ENCODE measurements at regions of chr9 and their contacts with region 1.

Region 1: GRCh38 chr9:114681594-114682332 is at the start of gene TEX48:
- DNase-seq: peak; percentile 56 to 86 (median 69)
- H3K4me3 ChIP-seq: no peak within 1 kb of the TSS
- H3K4me3 Mint-ChIP-seq: peak within 1 kb of the TSS in 6 of 7 donors; percentile 53 to 89 (median 74)
- H3K27ac ChIP-seq: no peak within 1 kb of the TSS
- H3K27ac Mint-ChIP-seq: peak within 1 kb of the TSS in 7 of 8 donors; percentile 3 to 95 (median 79)
- H3K4me1 ChIP-seq: peaks cover 6% of the 10 kb centered on the region
- H3K4me1 Mint-ChIP-seq: peaks cover 18 to 27% (median 19%) of the 10 kb centered on the region in 3 donors
- H3K27me3 ChIP-seq: peaks cover 9% of the 10 kb centered on the region
- H3K27me3 Mint-ChIP-seq: peaks cover 0 to 15% of the 10 kb centered on the region in 2 donors
- total RNA-seq, gene TEX48: 0.46 to 0.86 TPM

Region 2: GRCh38 chr9:114641967-114642366 is 39.8 kb before region 1 on chr9:
- CTCF ChIA-PET with region 1: no interaction called
- POLR2A ChIA-PET with region 1: no interaction called
- DNase-seq: no peak
- H3K4me3 ChIP-seq: no peak overlapping the region
- H3K4me3 Mint-ChIP-seq: no peak overlapping the region
- H3K27ac ChIP-seq: no peak overlapping the region
- H3K27ac Mint-ChIP-seq: peak overlapping the region in 1 of 8 donors; percentile 54
- H3K4me1 ChIP-seq: no peaks in the 10 kb centered on the region
- H3K4me1 Mint-ChIP-seq: no peaks in the 10 kb centered on the region
- H3K27me3 ChIP-seq: no peaks in the 10 kb centered on the region
- H3K27me3 Mint-ChIP-seq: no peaks in the 10 kb centered on the region

Region 3: DNA sequence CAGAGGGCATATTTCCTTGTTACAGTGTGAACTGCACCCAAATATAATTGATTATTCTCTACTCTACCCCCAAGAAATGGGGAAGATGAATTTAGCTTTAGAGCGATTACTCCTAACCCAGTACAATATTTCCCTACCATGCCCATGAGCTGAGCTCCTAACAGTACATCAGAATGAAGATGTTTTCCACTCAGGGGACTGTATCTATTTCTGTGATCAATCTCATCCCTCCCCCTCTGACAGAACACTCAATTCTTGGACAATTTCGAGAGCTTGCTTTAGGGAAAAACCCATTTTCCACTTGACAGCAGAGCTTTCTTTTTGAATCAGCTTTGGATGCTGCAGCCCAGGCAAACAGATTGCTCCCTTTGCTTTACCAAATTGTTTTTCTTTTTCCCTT is 24.9 kb after region 1 on chr9:
- CTCF ChIA-PET with region 1: interaction called, 11 read pairs
- POLR2A ChIA-PET with region 1: no interaction called
- DNase-seq: no peak
- H3K4me3 ChIP-seq: no peak overlapping the region
- H3K4me3 Mint-ChIP-seq: no peak overlapping the region
- H3K27ac ChIP-seq: no peak overlapping the region
- H3K27ac Mint-ChIP-seq: no peak overlapping the region
- H3K4me1 ChIP-seq: peaks cover 4% of the 10 kb centered on the region
- H3K4me1 Mint-ChIP-seq: peaks cover 6 to 22% (median 21%) of the 10 kb centered on the region in 3 donors
- H3K27me3 ChIP-seq: no peaks in the 10 kb centered on the region
- H3K27me3 Mint-ChIP-seq: peaks cover 0 to 2% of the 10 kb centered on the region in 2 donors

Region 4: DNA sequence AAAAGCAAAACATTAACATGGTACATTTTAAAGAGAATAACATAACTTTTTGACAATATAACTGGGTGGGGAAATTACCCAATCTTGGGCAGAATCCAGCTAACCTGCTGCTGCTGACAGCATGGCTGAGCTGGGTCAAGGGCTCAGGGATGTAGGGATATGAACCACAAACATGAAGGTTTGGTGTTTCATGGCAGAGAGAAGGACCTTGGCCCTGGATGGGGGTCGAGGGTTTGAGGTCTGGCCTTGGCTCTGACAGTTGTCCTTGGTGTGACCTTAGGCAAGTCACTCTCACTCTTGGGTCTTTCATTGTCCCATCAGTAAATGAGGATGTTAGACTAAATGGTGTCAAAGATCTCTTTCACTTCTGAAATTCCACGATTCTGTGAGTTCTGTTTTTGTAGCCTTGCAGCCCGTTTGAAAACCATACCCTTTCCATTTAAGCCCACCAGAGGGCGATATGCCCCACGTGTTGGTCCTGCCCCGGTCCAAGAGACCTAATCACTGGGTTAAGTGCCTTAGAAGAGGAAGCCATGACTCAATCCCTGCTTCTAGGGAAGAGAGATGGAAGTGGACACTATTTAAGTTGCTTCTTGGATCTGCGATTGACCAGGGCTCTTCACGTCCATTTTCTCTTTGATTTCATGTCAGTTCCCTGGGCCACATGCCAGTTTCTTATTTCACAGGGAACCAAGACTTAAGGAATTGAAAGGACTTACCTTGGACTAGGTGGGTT is 57.0 kb after region 1 on chr9:
- CTCF ChIA-PET with region 1: interaction called, 36 read pairs
- POLR2A ChIA-PET with region 1: no interaction called
- DNase-seq: peak; percentile 44 to 78 (median 64)
- H3K4me3 ChIP-seq: no peak overlapping the region
- H3K4me3 Mint-ChIP-seq: peak overlapping the region in 5 of 7 donors; percentile 9 to 66 (median 45)
- H3K27ac ChIP-seq: no peak overlapping the region
- H3K27ac Mint-ChIP-seq: peak overlapping the region; percentile 82 to 92 (median 88)
- H3K4me1 ChIP-seq: peaks cover 31% of the 10 kb centered on the region
- H3K4me1 Mint-ChIP-seq: peaks cover 45 to 46% (median 45%) of the 10 kb centered on the region in 3 donors
- H3K27me3 ChIP-seq: no peaks in the 10 kb centered on the region
- H3K27me3 Mint-ChIP-seq: no peaks in the 10 kb centered on the region

Region 5: GRCh38 chr9:114779352-114779845 is 97.6 kb after region 1 on chr9:
- CTCF ChIA-PET with region 1: no interaction called
- POLR2A ChIA-PET with region 1: no interaction called
- DNase-seq: no peak
- H3K4me3 ChIP-seq: no peak overlapping the region
- H3K4me3 Mint-ChIP-seq: no peak overlapping the region
- H3K27ac ChIP-seq: no peak overlapping the region
- H3K27ac Mint-ChIP-seq: no peak overlapping the region
- H3K4me1 ChIP-seq: peaks cover 4% of the 10 kb centered on the region
- H3K4me1 Mint-ChIP-seq: peaks cover 4 to 26% (median 22%) of the 10 kb centered on the region in 3 donors
- H3K27me3 ChIP-seq: no peaks in the 10 kb centered on the region
- H3K27me3 Mint-ChIP-seq: peaks cover 0 to 4% of the 10 kb centered on the region in 2 donors

Region 6: GRCh38 chr9:114906908-114907571 is 225.3 kb after region 1 on chr9:
- CTCF ChIA-PET with region 1: interaction called, 77 read pairs
- POLR2A ChIA-PET with region 1: no interaction called
- DNase-seq: peak in 4 of 5 donors; percentile 6 to 55 (median 28)
- H3K4me3 ChIP-seq: peak overlapping the region; percentile 9
- H3K4me3 Mint-ChIP-seq: peak overlapping the region in 6 of 7 donors; percentile 23 to 83 (median 74)
- H3K27ac ChIP-seq: no peak overlapping the region
- H3K27ac Mint-ChIP-seq: peak overlapping the region; percentile 80 to 96 (median 92)
- H3K4me1 ChIP-seq: peaks cover 91% of the 10 kb centered on the region
- H3K4me1 Mint-ChIP-seq: peaks cover 0 to 58% (median 53%) of the 10 kb centered on the region in 3 donors
- H3K27me3 ChIP-seq: no peaks in the 10 kb centered on the region
- H3K27me3 Mint-ChIP-seq: no peaks in the 10 kb centered on the region

Region 7: DNA sequence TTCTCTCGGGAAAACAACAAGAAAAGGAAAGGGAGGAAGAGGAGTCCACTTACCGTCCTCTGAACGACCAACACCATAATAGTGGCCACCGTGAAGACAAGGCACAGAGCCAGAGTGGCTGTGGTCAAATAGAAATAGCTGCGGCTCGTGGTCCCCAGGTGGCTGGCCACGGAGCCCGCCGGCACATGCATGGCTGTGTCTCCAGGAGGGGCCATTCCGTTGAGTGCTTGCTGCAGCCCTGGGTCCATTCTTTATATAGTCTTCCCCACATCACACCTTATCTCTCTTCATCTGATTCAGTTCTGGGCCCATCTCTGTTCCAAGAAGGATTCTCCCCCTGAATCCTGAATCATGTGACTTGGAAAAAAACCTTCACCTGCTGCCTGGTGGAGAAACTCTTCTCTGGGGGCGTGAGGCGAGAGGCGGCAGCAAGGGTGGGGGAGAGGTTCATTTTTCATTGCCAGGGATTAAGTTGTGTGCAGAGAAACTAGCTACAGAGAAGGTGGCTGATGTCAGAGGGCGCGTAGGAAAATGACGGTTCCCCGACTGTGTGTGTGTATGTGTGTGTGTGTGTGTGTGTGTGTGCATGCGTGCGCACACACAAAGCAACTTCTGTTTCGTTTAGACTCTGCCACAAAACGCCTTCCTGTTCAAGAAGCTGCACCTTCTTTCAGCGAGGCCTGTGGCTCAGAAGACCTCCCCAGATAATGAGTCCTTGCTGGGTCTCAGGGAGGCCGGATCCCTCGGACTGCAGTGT is 248.5 kb after region 1 on chr9 and contains the start of gene TNFSF8:
- CTCF ChIA-PET with region 1: interaction called, 12 read pairs
- POLR2A ChIA-PET with region 1: no interaction called
- DNase-seq: peak; percentile 54 to 91 (median 79)
- H3K4me3 ChIP-seq: peak within 1 kb of the TSS; percentile 89
- H3K4me3 Mint-ChIP-seq: peak within 1 kb of the TSS; percentile 89 to 98 (median 97)
- H3K27ac ChIP-seq: peak within 1 kb of the TSS; percentile 60
- H3K27ac Mint-ChIP-seq: peak within 1 kb of the TSS; percentile 86 to 99 (median 98)
- H3K4me1 ChIP-seq: peaks cover 36% of the 10 kb centered on the region
- H3K4me1 Mint-ChIP-seq: peaks cover 38 to 56% (median 51%) of the 10 kb centered on the region in 3 donors
- H3K27me3 ChIP-seq: no peaks in the 10 kb centered on the region
- H3K27me3 Mint-ChIP-seq: peaks cover 0 to 3% of the 10 kb centered on the region in 2 donors
- total RNA-seq, gene TNFSF8: 72.6 to 73.2 TPM